ENCODE measurements at regions of chr10 and their contacts with region 1.

Region 1: GRCh38 chr10:3935141-3935540 is 150.1 kb upstream of the KLF6 start:
- DNase-seq: no peak
- ATAC-seq: peak; percentile 76

Region 2: DNA sequence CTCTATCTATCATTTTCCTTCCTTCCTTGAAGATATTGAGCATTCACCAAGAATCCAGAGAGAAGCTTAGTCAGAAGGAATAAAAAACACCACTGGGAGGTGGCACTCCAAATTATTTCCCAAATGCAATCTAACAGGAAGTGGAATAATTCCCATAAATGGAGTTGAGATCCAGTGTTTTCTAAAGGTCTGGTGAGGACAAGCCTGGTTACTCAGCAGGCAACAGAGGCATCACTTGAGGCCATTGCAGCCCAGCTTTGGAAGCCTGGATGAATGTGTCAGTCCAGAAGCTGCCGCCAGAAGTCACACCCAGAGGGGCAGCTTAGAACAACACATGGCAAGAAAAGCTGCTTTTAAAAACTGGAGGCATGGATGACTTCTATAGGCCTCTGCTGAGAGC is 138.8 kb after region 1 on chr10:
- intact Hi-C with region 1: loop called (anchors 10 kb)
- DNase-seq: peak; percentile 68
- ATAC-seq: peak; percentile 73